ENCODE measurements at regions of chr11 and their contacts with region 1.

Region 1: GRCh38 chr11:59053387-59053786 is 32.7 kb upstream of the GLYATL1B start:
- DNase-seq: peak; percentile 76
- H3K4me3 ChIP-seq: no peak overlapping the region
- H3K27ac ChIP-seq: no peak overlapping the region
- H3K4me1 ChIP-seq: peaks cover 49% of the 10 kb centered on the region
- CTCF ChIP-seq: peak; percentile 89

Region 2: DNA sequence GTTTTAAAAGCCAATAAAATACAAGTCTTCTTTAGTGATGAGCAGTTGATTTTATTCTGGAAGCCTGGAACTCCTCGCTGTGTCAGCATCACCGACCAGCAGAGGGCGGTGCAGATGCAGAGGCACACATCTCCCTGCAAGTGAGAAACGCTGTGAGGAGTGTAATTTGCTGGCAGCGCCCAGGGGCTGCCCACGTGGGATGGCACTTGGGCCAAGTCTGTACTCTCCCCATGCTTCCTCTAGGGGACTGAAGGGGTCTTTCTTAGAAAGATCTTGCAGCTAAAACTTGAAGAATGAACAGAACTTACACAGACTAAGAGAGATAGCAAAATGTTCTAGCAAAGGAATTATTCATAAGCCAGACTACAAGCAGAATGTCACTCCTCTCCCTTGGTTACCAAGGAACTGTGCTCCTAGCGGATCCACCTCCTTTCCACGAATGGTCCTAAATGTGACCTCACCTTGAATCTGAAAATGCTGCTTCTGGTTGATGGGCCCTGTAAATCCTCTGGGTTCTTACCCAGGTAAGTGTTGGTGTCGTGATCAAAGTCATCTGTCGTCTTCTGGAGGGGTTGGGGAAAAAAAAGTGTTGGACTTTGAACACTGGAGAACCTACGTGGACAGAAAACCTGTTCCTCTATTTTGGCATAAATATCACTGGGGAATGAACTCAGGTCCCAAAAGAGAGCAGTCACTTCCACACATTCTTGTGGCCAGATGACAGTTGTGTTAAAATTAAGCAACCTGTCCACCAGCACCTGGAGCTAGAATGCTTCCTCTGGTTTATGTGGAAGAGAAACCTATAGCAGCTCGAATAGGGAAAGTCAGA is 399.1 kb before region 1 on chr11:
- CTCF ChIA-PET with region 1: no interaction called
- POLR2A ChIA-PET with region 1: no interaction called
- intact Hi-C with region 1: loop called (anchors 1 kb)
- DNase-seq: peak; percentile 81
- H3K4me3 ChIP-seq: no peak overlapping the region
- H3K27ac ChIP-seq: no peak overlapping the region
- H3K4me1 ChIP-seq: no peaks in the 10 kb centered on the region
- CTCF ChIP-seq: peak; percentile 96

Region 3: GRCh38 chr11:58845366-58845765 is 208.0 kb before region 1 on chr11:
- CTCF ChIA-PET with region 1: no interaction called
- POLR2A ChIA-PET with region 1: no interaction called
- intact Hi-C with region 1: loop called (anchors 5 kb)
- DNase-seq: no peak
- H3K4me3 ChIP-seq: no peak overlapping the region
- H3K27ac ChIP-seq: no peak overlapping the region
- H3K4me1 ChIP-seq: no peaks in the 10 kb centered on the region
- CTCF ChIP-seq: no peak

Region 4: GRCh38 chr11:58923300-58923788 is 130.0 kb before region 1 on chr11:
- CTCF ChIA-PET with region 1: interaction called, 3 read pairs
- POLR2A ChIA-PET with region 1: no interaction called
- intact Hi-C with region 1: loop called (anchors 10 kb)
- DNase-seq: peak; percentile 67
- H3K4me3 ChIP-seq: no peak overlapping the region
- H3K27ac ChIP-seq: no peak overlapping the region
- H3K4me1 ChIP-seq: no peaks in the 10 kb centered on the region
- CTCF ChIP-seq: peak; percentile 77

Region 5: DNA sequence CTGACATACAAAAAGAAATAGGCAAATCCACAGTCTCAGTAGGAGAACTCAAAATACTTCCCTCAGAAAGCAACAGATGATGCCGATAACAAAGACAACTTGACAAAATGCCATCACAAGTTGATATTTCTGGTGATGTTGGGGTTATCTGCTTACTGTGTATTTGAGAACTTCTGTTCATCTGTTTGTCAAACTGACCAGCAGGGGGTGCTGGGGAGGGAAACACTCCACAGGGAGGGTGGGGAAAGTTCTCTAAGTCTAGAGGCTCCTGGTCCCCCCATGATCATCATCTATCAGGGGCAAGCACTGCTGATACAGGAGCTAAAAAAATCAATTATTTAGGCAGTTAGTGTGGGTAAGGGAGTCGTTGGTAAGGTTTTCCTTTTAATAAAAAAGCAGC is 94.9 kb before region 1 on chr11:
- CTCF ChIA-PET with region 1: no interaction called
- POLR2A ChIA-PET with region 1: no interaction called
- intact Hi-C with region 1: loop called (anchors 1 kb)
- DNase-seq: peak; percentile 63
- H3K4me3 ChIP-seq: no peak overlapping the region
- H3K27ac ChIP-seq: no peak overlapping the region
- H3K4me1 ChIP-seq: no peaks in the 10 kb centered on the region
- CTCF ChIP-seq: peak; percentile 84

Region 6: DNA sequence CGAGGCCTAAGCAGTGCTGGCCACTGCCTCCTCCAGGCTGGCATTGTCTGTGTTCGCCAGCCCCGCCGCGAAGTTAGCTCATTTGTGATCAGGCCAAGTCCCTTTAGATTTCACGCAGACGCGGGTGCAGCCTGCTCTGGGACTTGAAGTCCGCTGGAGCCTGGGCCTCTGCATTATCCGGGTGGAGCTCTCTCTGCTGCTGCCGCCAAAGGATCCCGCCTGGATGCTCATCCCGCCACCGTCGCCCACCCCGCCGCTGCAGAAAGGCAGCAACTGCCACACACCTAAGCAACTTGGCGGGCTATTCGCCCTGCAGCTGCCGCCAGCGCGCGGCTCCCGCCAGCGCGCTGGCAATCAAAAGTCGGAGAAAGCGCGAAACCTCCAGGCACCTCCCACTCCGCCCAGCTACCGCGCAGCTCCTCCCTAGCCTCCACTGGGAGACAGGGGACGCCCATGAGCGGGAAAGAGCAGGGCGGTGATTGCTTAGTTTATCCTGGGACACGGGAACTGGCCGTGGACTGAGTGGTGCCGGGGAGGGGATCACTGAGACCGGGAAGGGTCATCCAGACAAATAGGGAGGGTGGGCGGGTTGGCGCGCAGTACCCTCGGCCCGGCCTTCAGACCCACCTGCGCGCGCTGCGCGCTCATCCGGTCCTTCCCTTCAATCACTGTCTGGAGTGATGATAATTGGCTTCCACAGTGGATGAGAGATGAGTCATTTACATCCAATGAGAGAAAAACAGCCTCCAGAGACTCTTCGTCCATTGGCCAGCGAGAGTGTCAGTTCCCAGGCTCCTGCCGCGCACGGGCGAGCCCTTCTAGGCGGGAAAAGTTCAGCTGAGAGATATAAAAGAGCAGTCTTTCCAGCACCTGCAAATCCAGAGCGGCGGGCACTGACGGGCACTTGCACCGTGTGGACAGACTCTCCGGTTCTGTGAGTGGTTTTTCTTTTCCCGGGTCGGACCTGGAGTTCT is 53.3 kb after region 1 on chr11 and contains the start of gene FAM111B:
- CTCF ChIA-PET with region 1: interaction called, 3 read pairs
- POLR2A ChIA-PET with region 1: interaction called, 3 read pairs
- intact Hi-C with region 1: loop called (anchors 1 kb)
- DNase-seq: peak; percentile 91
- H3K4me3 ChIP-seq: peak within 1 kb of the TSS; percentile 88
- H3K27ac ChIP-seq: peak within 1 kb of the TSS; percentile 70
- H3K4me1 ChIP-seq: peaks cover 77% of the 10 kb centered on the region
- CTCF ChIP-seq: peak; percentile 35
- total RNA-seq, gene FAM111B: 30.3 and 37.6 TPM in 2 replicates

Region 7: DNA sequence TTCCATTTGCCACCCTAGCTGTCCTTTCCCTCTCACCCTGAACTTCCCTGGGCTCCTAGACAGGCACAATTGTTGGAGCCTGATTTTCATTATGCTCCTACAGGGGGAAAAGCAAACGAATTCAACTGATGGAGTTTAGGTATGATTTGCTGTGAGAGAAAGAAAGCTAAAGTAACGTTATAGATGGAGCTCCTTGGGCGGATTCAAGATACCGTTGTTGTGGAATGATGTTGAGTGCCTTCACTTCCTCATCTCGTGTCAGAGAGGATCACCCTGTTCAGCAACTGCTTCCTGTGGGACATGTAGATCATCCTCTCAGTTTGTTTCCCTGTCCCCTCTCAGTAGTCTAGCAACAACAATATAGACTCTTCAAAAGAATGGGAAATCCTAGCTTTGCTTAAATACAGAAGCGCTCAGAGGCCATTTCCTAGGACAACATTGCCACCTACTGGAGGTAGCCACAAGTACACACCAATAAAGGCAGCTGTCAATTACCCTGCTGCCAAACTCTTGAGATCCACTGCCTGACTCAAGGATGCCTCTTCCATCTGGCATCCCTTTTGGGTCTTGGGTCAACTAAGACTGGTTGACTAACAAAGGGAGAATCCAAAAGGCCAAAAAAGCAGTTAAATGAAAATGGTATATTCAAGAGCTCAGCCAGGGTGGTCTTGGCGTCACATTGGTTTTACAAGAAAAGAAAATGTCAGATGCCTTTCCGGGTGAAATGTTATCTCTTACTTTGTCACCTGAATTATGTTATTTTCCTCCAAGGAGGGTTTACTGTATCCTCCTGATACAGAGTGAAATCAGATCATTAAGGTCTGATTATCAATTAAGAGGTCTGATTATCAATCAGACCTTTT is 105.0 kb after region 1 on chr11:
- CTCF ChIA-PET with region 1: interaction called, 5 read pairs
- POLR2A ChIA-PET with region 1: no interaction called
- intact Hi-C with region 1: loop called (anchors 5 kb)
- DNase-seq: peak; percentile 81
- H3K4me3 ChIP-seq: no peak overlapping the region
- H3K27ac ChIP-seq: no peak overlapping the region
- H3K4me1 ChIP-seq: no peaks in the 10 kb centered on the region
- CTCF ChIP-seq: peak; percentile 95

Measured in OCI-LY7 (cell line).